A549 (cell line): ENCODE measurements at regions of chr9 and their contacts with region 1.

Region 1: DNA sequence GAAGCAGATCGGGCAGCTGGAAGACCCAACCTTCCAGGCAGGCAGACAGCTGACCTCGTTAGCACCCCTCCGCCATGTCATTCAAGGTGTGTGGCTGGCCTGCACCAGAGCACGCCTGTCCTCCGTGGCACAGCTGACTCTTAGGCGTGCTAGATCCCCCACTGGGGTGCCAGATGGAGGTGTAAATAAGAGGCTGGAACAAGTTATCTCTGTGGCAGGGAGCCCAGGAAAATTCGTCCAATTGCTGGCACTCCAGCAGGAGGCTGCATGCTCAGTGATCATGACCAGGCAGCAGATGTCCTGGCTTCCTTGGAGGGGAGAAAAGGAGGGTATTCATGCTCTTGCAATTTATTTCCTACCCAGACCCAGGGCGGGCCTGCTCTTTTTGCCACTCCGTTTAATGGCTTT is 7.8 kb upstream of the ALDOB start:
- DNase-seq: no peak
- ATAC-seq: no peak
- H3K4me3 ChIP-seq: no peak overlapping the region
- H3K27ac ChIP-seq: no peak overlapping the region
- H3K4me1 ChIP-seq: 0 out of 3 replicates have a peak, but pooled peaks cover 4% of the 10 kb centered on the region
- CTCF ChIP-seq: no peak
- EP300 ChIP-seq: no peak
- POLR2A ChIP-seq: no peak
- RAD21 ChIP-seq: no peak

Region 2: DNA sequence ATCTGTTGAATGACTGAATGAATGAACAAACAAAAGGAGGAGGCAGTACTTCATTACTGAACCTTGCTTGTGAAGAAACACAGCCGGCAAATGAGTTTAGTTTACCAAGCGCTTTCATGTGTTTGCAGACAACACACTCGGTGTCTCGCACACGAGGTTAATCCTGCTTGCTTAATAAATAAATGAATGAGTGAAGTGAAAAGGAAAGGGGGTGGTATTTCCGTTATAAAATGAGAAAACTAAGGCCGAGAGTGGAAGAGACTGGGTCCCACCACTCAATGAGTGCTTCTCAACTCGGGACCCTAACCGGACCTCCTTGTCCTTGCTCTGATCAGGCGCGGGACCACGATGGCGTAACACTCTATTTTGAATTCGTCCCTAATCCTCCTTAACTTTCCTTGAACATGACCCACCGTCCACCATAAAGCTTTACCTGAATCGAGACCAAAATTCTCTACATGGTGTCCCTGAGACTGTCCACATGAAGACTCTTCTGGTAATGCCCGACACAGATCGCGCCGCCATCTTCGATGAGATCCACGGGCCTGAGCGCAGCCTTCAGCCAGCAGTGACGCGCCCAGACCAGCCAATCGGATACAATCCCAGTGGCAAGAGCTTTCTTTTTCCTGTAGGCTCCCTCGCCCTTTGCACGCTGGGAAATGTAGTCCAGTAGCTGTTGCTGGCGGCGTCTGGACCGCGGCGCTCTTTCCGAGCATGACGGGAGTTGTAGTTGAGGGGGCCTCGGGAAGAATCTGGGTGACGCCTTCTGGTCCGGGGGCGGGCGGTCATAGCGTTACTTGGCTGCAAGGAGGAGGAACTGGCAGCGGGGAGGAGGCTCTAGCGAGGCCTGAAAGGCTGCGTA is 45.1 kb before region 1 on chr9 and contains the starts of genes MRPL50 and ZNF189:
- CTCF ChIA-PET with region 1: interaction called, 10 read pairs
- POLR2A ChIA-PET with region 1: interaction called, 12 read pairs
- DNase-seq: peak; percentile 96 to 98
- ATAC-seq: peak; percentile 99
- H3K4me3 ChIP-seq: peak within 1 kb of the TSS; percentile 56
- H3K27ac ChIP-seq: peak within 1 kb of the TSS; percentile 89 to 95
- H3K4me1 ChIP-seq: peaks cover 10% of the 10 kb centered on the region; the same call in 1 of the 3 replicates
- CTCF ChIP-seq: no peak
- EP300 ChIP-seq: no peak
- POLR2A ChIP-seq: peak; percentile 74
- RAD21 ChIP-seq: no peak
- polyA plus RNA-seq, gene MRPL50: 37.6 and 42.5 TPM in 2 replicates
- polyA plus RNA-seq, gene ZNF189: 13.9 and 14.0 TPM in 2 replicates